GM10248 (cell line): ENCODE measurements at regions of chr1 and their contacts with region 1.

Region 1: DNA sequence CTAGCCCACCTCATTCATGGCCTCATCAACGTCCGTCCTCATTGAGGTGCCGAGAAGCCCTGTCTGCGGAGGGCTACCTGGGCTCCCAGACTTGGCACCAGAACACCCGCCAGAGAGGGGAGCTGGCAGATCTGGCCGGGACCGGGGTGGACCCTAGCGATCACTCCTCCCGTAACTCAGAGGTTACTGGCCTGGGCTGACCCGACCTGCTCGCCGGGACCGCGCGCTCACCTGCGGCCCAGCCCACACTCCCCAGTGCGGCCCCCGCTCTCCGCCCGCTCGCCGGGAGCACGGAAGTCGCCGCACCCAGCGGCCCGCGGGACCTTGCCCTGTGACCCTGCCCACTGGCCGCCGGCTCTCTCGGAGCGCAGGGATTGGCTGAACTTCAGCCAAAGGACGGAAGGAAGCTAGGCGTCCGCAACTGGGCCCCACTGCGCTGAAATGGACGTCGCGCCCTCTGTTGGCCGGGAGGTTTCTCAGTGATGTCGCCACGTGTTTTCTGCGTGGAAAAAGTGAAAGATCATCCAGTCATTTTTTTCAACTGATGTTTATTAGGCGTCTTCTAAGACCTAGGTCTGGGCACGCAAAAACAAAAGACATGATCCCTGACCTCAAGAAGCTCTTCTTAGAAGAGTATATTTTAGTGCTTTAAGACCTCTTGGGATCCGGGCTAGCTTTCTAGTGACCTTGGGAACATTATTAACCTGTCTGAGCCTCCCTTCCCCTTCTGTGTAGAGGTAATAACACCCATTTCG is at the start of gene SMIM12:
- DNase-seq: peak; percentile 97
- CTCF ChIP-seq: peak; percentile 90

Region 2: GRCh38 chr1:34844252-34844634 is 15.4 kb before region 1 on chr1:
- CTCF ChIA-PET with region 1: interaction called, 12 read pairs
- POLR2A ChIA-PET with region 1: no interaction called
- DNase-seq: no peak
- CTCF ChIP-seq: no peak